ENCODE measurements at regions of chr3 and their contacts with region 1.

Region 1: GRCh38 chr3:10744098-10744465 is 71.9 kb upstream of the SLC6A11 start:
- DNase-seq: no peak
- ATAC-seq: no peak
- H3K4me3 ChIP-seq: no peak overlapping the region
- H3K27ac ChIP-seq: no peak overlapping the region
- H3K4me1 ChIP-seq: no peaks in the 10 kb centered on the region
- H3K27me3 ChIP-seq: peaks cover 0 to 48% of the 10 kb centered on the region in 2 donors
- CTCF ChIP-seq: no peak

Region 2: GRCh38 chr3:10344147-10344943 is 399.7 kb before region 1 on chr3:
- intact Hi-C with region 1: loop called in 1 of 2 experiments (anchors 5 kb)
- DNase-seq: peak in 2 of 4 donors; percentile 28 to 36
- ATAC-seq: peak; percentile 65
- H3K4me3 ChIP-seq: no peak overlapping the region
- H3K27ac ChIP-seq: no peak overlapping the region
- H3K4me1 ChIP-seq: no peaks in the 10 kb centered on the region
- H3K27me3 ChIP-seq: no peaks in the 10 kb centered on the region
- CTCF ChIP-seq: peak; percentile 83 to 92

Region 3: DNA sequence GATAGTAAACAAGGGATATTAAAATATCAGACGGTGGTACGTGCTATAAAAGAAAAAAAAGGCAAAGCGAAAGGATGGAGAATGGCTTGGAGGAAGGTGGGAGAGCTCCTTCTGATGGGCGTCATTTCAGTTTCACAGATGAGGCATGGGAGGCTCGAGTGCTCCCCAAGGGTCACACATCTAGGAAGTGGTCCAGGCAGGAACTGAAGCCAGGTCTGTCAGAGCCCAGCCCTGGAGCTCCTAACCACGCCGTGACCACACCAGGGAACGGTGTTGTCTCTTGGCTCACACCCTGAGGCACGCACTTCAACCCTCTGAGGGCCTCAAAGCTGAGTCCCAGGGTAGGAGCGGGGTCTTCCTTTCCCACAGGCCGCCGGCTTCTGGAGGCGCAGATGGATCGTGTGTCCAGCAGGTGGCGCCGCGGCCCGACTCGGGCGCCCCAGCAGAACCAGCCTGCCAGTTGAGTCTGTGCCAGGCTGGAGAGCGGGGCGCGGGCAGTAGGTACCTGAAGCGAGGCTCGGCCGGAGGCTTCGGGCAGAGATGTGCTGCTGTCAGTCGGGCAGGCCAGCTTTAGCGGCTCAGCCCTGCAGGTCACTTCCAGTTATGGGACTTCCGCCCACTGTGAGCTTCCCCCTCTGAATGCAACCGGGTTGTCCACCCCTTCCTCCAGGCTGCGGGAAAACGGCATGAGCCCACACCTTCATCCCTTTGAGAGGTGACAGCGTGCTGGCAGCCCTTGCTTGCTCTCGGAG is 316.6 kb after region 1 on chr3:
- intact Hi-C with region 1: no loop called
- DNase-seq: peak; percentile 29 to 93 (median 58)
- ATAC-seq: peak; percentile 91
- H3K4me3 ChIP-seq: no peak overlapping the region
- H3K27ac ChIP-seq: no peak overlapping the region
- H3K4me1 ChIP-seq: peaks cover 5 to 6% of the 10 kb centered on the region in 2 donors
- H3K27me3 ChIP-seq: peaks cover 0 to 23% of the 10 kb centered on the region in 2 donors
- CTCF ChIP-seq: peak; percentile 88 to 90

Measured in left lung (tissue), 14 donors.